ENCODE measurements at regions of chr11 and their contacts with region 1.

Region 1: GRCh38 chr11:5808500-5809121 is at the start of gene OR52N2:
- DNase-seq: peak; percentile 74
- H3K4me3 Mint-ChIP-seq: peak within 1 kb of the TSS; percentile 74
- H3K27ac Mint-ChIP-seq: no peak within 1 kb of the TSS
- H3K4me1 Mint-ChIP-seq: peaks cover 13% of the 10 kb centered on the region
- H3K27me3 Mint-ChIP-seq: peaks cover 79% of the 10 kb centered on the region
- CTCF ChIP-seq: peak; percentile 72
- total RNA-seq, gene OR52N2: not detected in 2 replicates

Region 2: DNA sequence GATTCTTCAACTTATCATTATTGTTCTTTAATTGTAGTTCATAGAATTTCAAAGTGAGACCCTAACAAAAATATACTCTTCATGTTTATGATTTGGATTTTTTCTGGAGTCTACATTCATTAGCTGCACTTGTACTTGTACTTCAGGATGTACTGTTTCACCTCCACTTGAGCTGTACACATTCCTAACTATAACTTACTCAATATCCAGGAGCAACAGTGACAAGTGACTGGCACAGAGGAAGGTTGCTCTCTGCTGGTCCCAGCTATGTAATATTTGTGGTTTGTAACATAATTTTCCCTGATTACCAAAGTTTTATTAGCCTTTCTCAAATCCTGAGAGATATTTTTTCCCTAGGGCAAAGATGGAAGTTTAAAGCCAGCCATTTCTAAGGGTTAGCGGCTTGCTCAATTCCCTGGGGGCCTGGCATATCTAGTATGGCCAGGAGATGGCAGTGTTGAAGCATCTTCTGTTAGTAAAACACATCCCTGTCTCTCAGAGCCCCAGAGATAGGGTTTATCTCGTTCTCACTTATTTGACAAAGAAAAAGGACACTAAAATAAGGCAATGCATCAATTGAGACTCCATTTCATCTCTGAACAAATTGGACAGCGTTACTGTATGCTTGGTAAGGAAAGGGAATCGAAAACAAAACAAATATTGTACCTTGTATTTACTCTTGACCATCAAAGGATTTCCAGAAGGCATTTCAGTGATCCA is 684.6 kb before region 1 on chr11:
- CTCF ChIA-PET with region 1: interaction called, 6 read pairs
- POLR2A ChIA-PET with region 1: no interaction called
- intact Hi-C with region 1: loop called (anchors 1 kb)
- DNase-seq: peak; percentile 74
- H3K4me3 Mint-ChIP-seq: no peak overlapping the region
- H3K27ac Mint-ChIP-seq: no peak overlapping the region
- H3K4me1 Mint-ChIP-seq: no peaks in the 10 kb centered on the region
- H3K27me3 Mint-ChIP-seq: peaks cover 62% of the 10 kb centered on the region
- CTCF ChIP-seq: peak; percentile 80

Region 3: DNA sequence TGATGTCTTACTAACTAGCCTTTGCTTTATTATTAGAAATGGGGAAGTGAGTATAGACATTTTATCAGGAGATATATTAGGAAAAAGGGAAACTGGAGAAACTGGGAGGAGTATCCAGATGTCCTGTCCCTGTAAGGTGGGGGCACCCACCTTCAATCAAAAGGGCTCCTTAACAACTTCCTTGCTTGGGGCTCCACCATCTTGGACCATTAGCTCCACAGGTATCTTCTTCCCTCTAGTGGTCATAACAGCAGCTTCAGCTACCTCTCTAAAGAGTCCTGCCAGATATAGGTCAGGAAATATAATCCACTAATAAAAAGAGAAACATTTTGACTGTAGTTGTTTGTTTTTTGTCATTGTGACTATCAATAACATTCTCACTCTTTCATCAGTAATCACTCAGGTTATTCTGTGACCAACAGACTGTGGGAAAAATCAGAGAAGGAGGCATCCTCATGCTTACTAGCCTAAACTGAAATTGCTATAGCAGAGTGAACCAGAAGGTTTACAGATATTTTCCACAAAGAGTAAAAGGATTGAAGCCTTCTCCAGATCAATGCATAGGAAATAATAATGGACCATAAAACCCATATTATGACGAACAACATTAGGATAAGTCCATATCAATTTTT is 517.3 kb before region 1 on chr11:
- CTCF ChIA-PET with region 1: interaction called, 4 read pairs
- POLR2A ChIA-PET with region 1: no interaction called
- intact Hi-C with region 1: loop called (anchors 1 kb)
- DNase-seq: peak; percentile 54
- H3K4me3 Mint-ChIP-seq: no peak overlapping the region
- H3K27ac Mint-ChIP-seq: no peak overlapping the region
- H3K4me1 Mint-ChIP-seq: no peaks in the 10 kb centered on the region
- H3K27me3 Mint-ChIP-seq: peaks cover 13% of the 10 kb centered on the region
- CTCF ChIP-seq: peak; percentile 68

Region 4: GRCh38 chr11:5476184-5476819 is 332.3 kb before region 1 on chr11:
- CTCF ChIA-PET with region 1: interaction called, 10 read pairs
- POLR2A ChIA-PET with region 1: no interaction called
- intact Hi-C with region 1: loop called (anchors 1 kb)
- DNase-seq: peak; percentile 64
- H3K4me3 Mint-ChIP-seq: no peak overlapping the region
- H3K27ac Mint-ChIP-seq: no peak overlapping the region
- H3K4me1 Mint-ChIP-seq: no peaks in the 10 kb centered on the region
- H3K27me3 Mint-ChIP-seq: peaks cover 43% of the 10 kb centered on the region
- CTCF ChIP-seq: peak; percentile 74

Region 5: GRCh38 chr11:5684646-5685362 is 123.8 kb before region 1 on chr11 and contains the start of gene TRIM5:
- CTCF ChIA-PET with region 1: interaction called, 7 read pairs
- POLR2A ChIA-PET with region 1: no interaction called
- intact Hi-C with region 1: loop called (anchors 2 kb)
- DNase-seq: peak; percentile 95
- H3K4me3 Mint-ChIP-seq: peak within 1 kb of the TSS; percentile 81
- H3K27ac Mint-ChIP-seq: peak within 1 kb of the TSS; percentile 78
- H3K4me1 Mint-ChIP-seq: peaks cover 14% of the 10 kb centered on the region
- H3K27me3 Mint-ChIP-seq: no peaks in the 10 kb centered on the region
- CTCF ChIP-seq: peak; percentile 48
- total RNA-seq, gene TRIM5: 27.9 and 28.6 TPM in 2 replicates

Region 6: DNA sequence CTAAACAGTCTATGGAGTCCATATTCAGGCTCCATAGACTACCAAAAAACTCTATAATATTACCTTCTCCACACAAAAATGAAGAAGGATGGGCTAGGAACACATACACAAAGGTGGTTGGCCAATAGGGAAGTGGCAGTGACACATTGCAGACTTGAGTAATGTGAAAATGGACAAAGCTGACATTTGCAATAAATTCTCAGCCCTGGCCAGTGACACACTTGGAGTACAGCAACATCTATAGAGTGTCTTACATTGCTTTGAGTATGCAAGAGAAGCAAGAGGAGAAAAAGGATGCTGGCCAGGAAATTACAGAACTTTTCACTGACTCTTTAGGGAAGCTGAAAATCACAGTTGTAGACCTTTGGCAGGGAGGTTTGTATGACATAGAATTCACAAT is 383.1 kb after region 1 on chr11:
- CTCF ChIA-PET with region 1: no interaction called
- POLR2A ChIA-PET with region 1: no interaction called
- intact Hi-C with region 1: no loop called
- DNase-seq: no peak
- H3K4me3 Mint-ChIP-seq: no peak overlapping the region
- H3K27ac Mint-ChIP-seq: no peak overlapping the region
- H3K4me1 Mint-ChIP-seq: no peaks in the 10 kb centered on the region
- H3K27me3 Mint-ChIP-seq: no peaks in the 10 kb centered on the region
- CTCF ChIP-seq: no peak